ENCODE measurements at regions of chr1 and their contacts with region 1.

Region 1: DNA sequence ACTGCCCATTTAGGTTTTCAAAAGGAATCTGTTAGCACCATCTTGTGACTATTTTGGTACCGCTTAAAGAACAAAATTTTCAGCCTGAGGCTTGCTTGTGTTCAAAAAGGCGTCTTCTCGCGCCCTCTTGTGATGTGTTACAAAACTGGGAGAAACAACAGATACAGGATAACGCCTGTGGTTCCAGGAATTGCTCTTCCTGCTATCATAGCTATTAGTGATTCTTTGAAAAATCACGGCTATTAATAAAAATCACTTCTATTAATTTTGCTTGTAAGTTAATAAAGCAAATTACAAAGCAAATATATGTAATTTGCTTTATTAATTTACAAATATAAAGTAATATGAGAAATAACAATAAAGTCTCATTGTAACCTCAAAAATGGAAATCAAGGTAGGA is 82.2 kb upstream of the ABCD3 start:
- DNase-seq: peak in 4 of 14 experiments; percentile 6 to 41 (median 28)
- ATAC-seq: no peak
- H3K4me3 ChIP-seq: no peak overlapping the region
- H3K4me3 Mint-ChIP-seq: no peak overlapping the region
- H3K27ac ChIP-seq: no peak overlapping the region
- H3K27ac Mint-ChIP-seq: no peak overlapping the region
- H3K4me1 ChIP-seq: no peaks in the 10 kb centered on the region
- H3K4me1 Mint-ChIP-seq: no peaks in the 10 kb centered on the region
- H3K27me3 ChIP-seq: peaks cover 0 to 10% of the 10 kb centered on the region in 2 experiments
- H3K27me3 Mint-ChIP-seq: peaks cover 4% of the 10 kb centered on the region
- CTCF ChIP-seq: no peak

Region 2: DNA sequence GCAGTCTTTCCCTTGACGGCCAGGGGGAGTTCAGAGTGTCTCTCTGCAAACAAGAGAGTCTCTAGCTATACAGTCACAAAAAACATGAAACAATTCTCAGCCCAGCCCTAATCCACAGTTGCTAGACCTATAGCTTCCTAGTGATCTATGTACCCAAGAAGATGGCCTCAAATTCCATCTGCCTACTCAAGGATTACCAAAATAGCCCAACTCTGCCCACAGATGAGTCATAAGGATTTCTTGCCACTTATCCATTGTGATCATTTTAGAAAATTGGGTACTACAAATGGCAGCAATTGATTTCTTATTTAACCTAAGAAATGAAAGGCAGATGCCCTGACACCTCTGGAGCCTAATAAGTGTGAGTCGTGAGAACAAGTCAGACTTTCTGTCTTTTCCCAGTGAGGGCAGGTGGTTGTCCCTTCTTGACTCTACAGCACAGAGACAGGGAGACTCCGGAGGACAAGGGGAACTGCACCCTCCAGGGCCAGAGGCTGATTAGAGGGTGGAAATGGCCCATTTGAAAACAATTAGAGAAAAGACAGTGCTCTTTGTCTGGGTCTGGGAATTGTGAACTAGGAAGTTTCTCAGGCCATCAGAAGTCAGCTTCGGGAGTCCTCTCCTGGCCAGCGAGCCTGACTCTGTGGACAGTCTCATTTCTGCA is 280.4 kb before region 1 on chr1:
- CTCF ChIA-PET with region 1: no interaction called
- POLR2A ChIA-PET with region 1: no interaction called
- intact Hi-C with region 1: loop called in 1 of 2 experiments (anchors 10 kb)
- DNase-seq: no peak
- ATAC-seq: no peak
- H3K4me3 ChIP-seq: no peak overlapping the region
- H3K4me3 Mint-ChIP-seq: no peak overlapping the region
- H3K27ac ChIP-seq: no peak overlapping the region
- H3K27ac Mint-ChIP-seq: no peak overlapping the region
- H3K4me1 ChIP-seq: no peaks in the 10 kb centered on the region
- H3K4me1 Mint-ChIP-seq: no peaks in the 10 kb centered on the region
- H3K27me3 ChIP-seq: peaks cover 0 to 6% of the 10 kb centered on the region in 2 experiments
- H3K27me3 Mint-ChIP-seq: peaks cover 22% of the 10 kb centered on the region
- CTCF ChIP-seq: no peak

Region 3: DNA sequence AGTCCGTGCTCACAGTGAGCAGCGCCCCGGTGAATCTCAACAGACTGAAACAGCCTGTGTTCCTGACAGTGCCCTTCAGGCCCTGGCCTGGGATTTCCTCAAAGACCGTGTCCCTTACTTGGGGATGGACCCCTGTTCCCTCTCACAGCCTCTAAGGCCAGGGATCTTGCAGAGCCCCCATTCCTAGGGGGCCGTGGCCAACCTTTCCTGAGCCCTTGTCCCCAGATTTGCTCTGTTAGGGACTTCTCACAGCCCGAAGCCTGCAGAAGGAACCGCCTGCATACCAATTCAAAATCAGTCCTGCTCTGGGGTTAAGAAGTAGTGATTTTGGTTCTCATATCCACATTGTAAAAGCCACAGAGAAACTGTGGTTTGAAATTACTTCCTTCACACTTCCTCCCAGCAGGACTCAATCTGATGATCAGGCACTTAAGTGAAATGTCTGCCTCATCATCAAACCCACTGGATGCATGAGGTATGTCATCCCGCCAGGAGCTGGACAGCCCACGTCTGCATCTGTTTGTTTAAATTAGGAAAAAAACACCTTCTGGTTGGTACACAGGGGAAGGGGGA is 229.9 kb before region 1 on chr1:
- CTCF ChIA-PET with region 1: no interaction called
- POLR2A ChIA-PET with region 1: no interaction called
- intact Hi-C with region 1: no loop called
- DNase-seq: peak in 1 of 14 experiments; percentile 3
- ATAC-seq: no peak
- H3K4me3 ChIP-seq: no peak overlapping the region
- H3K4me3 Mint-ChIP-seq: no peak overlapping the region
- H3K27ac ChIP-seq: no peak overlapping the region
- H3K27ac Mint-ChIP-seq: no peak overlapping the region
- H3K4me1 ChIP-seq: peaks cover 3% of the 10 kb centered on the region
- H3K4me1 Mint-ChIP-seq: peaks cover 6% of the 10 kb centered on the region
- H3K27me3 ChIP-seq: peaks cover 0 to 24% of the 10 kb centered on the region in 2 experiments
- H3K27me3 Mint-ChIP-seq: peaks cover 33% of the 10 kb centered on the region
- CTCF ChIP-seq: no peak

Region 4: GRCh38 chr1:94284476-94284875 is 51.5 kb before region 1 on chr1:
- CTCF ChIA-PET with region 1: no interaction called
- POLR2A ChIA-PET with region 1: no interaction called
- intact Hi-C with region 1: no loop called
- DNase-seq: no peak
- ATAC-seq: no peak
- H3K4me3 ChIP-seq: no peak overlapping the region
- H3K4me3 Mint-ChIP-seq: no peak overlapping the region
- H3K27ac ChIP-seq: no peak overlapping the region
- H3K27ac Mint-ChIP-seq: no peak overlapping the region
- H3K4me1 ChIP-seq: no peaks in the 10 kb centered on the region
- H3K4me1 Mint-ChIP-seq: no peaks in the 10 kb centered on the region
- H3K27me3 ChIP-seq: no peaks in the 10 kb centered on the region
- H3K27me3 Mint-ChIP-seq: peaks cover 37% of the 10 kb centered on the region
- CTCF ChIP-seq: no peak